ENCODE measurements at regions of chr17 and their contacts with region 1.

Region 1: GRCh38 chr17:28343491-28343932 is 8.0 kb downstream of the TNFAIP1 start:
- DNase-seq: no peak
- ATAC-seq: no peak; the same call in 2 of the 3 replicates
- H3K4me3 ChIP-seq: no peak overlapping the region
- H3K27ac ChIP-seq: no peak overlapping the region
- H3K4me1 ChIP-seq: no peaks in the 10 kb centered on the region
- H3K27me3 ChIP-seq: no peaks in the 10 kb centered on the region
- CTCF ChIP-seq: no peak
- EP300 ChIP-seq: no peak
- POLR2A ChIP-seq: no peak
- RAD21 ChIP-seq: no peak

Region 2: GRCh38 chr17:28293994-28294393 is 49.5 kb before region 1 on chr17:
- CTCF ChIA-PET with region 1: no interaction called
- POLR2A ChIA-PET with region 1: no interaction called
- RAD21 ChIA-PET with region 1: no interaction called
- SMC1A ChIA-PET with region 1: no interaction called
- in situ Hi-C with region 1: loop called (anchors 5 kb)
- intact Hi-C with region 1: no loop called
- DNase-seq: no peak
- ATAC-seq: no peak
- H3K4me3 ChIP-seq: no peak overlapping the region
- H3K27ac ChIP-seq: no peak overlapping the region
- H3K4me1 ChIP-seq: no peaks in the 10 kb centered on the region; the same call in 1 of the 2 replicates
- H3K27me3 ChIP-seq: no peaks in the 10 kb centered on the region
- CTCF ChIP-seq: no peak
- EP300 ChIP-seq: no peak
- POLR2A ChIP-seq: no peak
- RAD21 ChIP-seq: no peak

Region 3: DNA sequence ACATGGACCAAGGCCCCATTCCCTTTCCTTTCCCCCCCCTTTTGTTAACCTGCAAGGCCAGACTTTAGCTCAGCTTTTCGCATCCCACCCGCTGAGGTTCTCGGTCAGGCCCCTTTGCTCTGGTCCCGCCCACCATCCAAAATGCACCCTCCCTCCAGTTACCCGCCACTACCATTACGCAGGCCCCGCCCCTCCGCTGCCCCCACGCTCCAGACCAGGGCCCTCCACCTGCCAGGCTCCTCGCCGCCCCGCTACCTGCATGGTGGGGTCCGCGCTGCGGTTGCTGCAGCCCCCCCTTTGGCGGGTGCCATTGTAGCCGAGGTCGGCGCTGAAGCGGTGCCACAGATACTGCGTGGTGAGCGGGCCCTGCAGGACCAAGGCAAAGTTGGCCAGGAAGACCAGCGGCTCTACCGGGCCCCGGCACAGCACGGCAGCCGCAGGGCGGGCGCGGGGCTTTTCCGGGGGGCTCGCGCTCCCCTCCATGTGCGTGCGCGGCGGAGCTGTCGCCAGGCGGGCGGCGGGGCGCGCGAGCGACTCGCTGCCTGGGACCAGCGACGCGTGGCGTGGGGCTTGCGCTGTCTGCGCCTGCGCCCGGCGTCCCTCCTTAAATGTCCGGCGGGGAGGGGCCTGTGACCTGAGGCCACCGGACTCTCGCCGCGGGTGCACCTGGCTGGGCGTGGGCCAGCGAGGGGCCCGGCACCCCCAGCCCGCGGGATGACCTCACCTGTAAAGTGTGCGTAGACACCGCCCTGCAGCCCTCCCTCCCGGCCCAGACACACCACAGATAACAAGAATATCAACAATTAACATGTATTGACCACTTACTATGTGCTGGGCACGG is 62.3 kb after region 1 on chr17 and contains the start of gene SLC46A1:
- CTCF ChIA-PET with region 1: no interaction called
- POLR2A ChIA-PET with region 1: no interaction called
- RAD21 ChIA-PET with region 1: no interaction called
- SMC1A ChIA-PET with region 1: no interaction called
- in situ Hi-C with region 1: no loop called
- intact Hi-C with region 1: no loop called
- DNase-seq: no peak
- ATAC-seq: peak; percentile 95
- H3K4me3 ChIP-seq: peak within 1 kb of the TSS; percentile 75
- H3K27ac ChIP-seq: peak within 1 kb of the TSS; percentile 37; the same call in 1 of the 2 replicates
- H3K4me1 ChIP-seq: peaks cover 3% of the 10 kb centered on the region
- H3K27me3 ChIP-seq: no peaks in the 10 kb centered on the region
- CTCF ChIP-seq: no peak
- EP300 ChIP-seq: no peak
- POLR2A ChIP-seq: peak; percentile 69
- RAD21 ChIP-seq: no peak
- polyA plus RNA-seq, gene SLC46A1: 3.4 to 6.0 TPM

Measured in GM12878 (cell line).